Mammary epithelial cell (primary cell): ENCODE measurements at regions of chr14 and their contacts with region 1.

Region 1: GRCh38 chr14:21917699-21918436 is 244.2 kb upstream of the OR4E1 start:
- DNase-seq: peak; percentile 30
- H3K4me3 ChIP-seq: no peak overlapping the region
- H3K27ac ChIP-seq: no peak overlapping the region
- H3K4me1 ChIP-seq: no peaks in the 10 kb centered on the region
- H3K27me3 ChIP-seq: no peaks in the 10 kb centered on the region
- CTCF ChIP-seq: peak; percentile 80 to 88

Region 2: DNA sequence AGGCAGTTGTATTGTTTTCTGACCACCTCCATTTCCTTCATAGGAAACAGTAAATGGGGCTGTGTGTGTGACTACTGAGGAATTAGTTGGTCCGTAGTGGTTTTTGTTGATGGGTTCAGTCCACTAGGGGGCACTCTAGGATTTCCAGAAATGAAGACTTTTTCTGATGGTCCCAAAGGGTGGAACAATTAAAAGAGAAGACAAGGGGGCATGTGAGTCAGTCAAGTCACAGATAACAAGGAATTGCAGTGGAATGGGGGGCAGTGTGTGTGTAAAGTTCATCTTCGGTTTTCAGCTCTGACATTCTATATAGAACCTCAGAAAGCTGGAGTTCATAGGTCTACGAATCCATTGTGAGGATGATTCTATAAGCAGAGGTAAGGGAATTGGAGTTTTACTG is 57.7 kb before region 1 on chr14:
- CTCF ChIA-PET with region 1: no interaction called
- dilution Hi-C with region 1: no loop called
- in situ Hi-C with region 1: no loop called
- intact Hi-C with region 1: loop called (anchors 2 kb)
- DNase-seq: peak; percentile 22
- H3K4me3 ChIP-seq: no peak overlapping the region
- H3K27ac ChIP-seq: no peak overlapping the region
- H3K4me1 ChIP-seq: peaks cover 6% of the 10 kb centered on the region
- H3K27me3 ChIP-seq: peaks cover 5% of the 10 kb centered on the region
- CTCF ChIP-seq: peak; percentile 36 to 63

Region 3: DNA sequence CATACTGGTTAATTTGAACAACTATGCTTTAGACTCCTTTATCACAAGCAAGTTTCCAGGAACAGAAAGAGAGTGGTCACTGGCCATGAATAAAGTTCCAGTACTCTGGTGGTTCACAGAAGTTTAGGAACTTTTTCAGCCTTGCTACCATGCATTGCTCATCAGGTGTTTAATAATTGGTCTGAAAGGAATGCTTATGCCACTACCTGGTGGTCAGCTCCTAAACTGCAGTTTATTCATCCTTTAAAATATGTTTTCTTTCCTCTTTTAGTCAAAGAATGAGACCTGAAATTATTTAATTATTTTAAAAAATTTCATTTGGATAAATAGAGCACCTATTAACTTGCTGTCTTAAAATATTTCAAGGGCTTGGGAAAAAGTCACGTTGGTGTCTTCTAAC is 15.8 kb after region 1 on chr14:
- CTCF ChIA-PET with region 1: interaction called, 3 read pairs
- dilution Hi-C with region 1: no loop called
- in situ Hi-C with region 1: no loop called
- intact Hi-C with region 1: loop called (anchors 1 kb)
- DNase-seq: no peak
- H3K4me3 ChIP-seq: no peak overlapping the region
- H3K27ac ChIP-seq: no peak overlapping the region
- H3K4me1 ChIP-seq: no peaks in the 10 kb centered on the region
- H3K27me3 ChIP-seq: no peaks in the 10 kb centered on the region
- CTCF ChIP-seq: peak; percentile 43 to 45

Region 4: DNA sequence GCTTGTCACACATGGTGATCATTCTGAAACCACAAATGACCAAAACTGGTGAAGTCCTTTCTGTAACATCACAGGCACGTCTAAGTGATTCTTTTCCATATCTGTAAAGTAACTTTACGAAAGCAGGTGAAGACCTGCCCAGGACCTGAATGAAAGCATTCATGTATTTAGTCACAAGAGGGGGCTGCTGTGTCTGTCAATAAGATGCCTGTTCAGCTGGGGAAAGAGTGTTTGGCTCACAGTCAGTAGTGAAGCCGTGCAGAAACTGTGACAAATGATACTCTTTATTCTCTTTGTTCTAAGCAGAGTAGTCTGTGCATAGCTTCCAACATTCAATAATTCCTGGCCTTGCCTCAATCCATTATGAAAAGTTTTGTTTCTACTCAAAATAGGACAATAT is 129.2 kb after region 1 on chr14:
- CTCF ChIA-PET with region 1: interaction called, 10 read pairs
- dilution Hi-C with region 1: no loop called
- in situ Hi-C with region 1: no loop called
- intact Hi-C with region 1: loop called (anchors 10 kb)
- DNase-seq: peak; percentile 45
- H3K4me3 ChIP-seq: no peak overlapping the region
- H3K27ac ChIP-seq: no peak overlapping the region
- H3K4me1 ChIP-seq: no peaks in the 10 kb centered on the region
- H3K27me3 ChIP-seq: peaks cover 2% of the 10 kb centered on the region
- CTCF ChIP-seq: peak; percentile 32 to 49